B cell (primary cell): ENCODE measurements at regions of chr12 and their contacts with region 1.

Region 1: GRCh38 chr12:95117178-95117599 is 43.8 kb upstream of the NR2C1 start:
- DNase-seq: peak; percentile 79
- ATAC-seq: peak; percentile 76
- H3K4me3 ChIP-seq: no peak overlapping the region
- H3K4me3 Mint-ChIP-seq: no peak overlapping the region
- H3K27ac ChIP-seq: no peak overlapping the region
- H3K27ac Mint-ChIP-seq: no peak overlapping the region
- H3K4me1 ChIP-seq: no peaks in the 10 kb centered on the region
- H3K4me1 Mint-ChIP-seq: no peaks in the 10 kb centered on the region
- H3K27me3 ChIP-seq: no peaks in the 10 kb centered on the region
- H3K27me3 Mint-ChIP-seq: no peaks in the 10 kb centered on the region
- CTCF ChIP-seq: peak; percentile 81

Region 2: DNA sequence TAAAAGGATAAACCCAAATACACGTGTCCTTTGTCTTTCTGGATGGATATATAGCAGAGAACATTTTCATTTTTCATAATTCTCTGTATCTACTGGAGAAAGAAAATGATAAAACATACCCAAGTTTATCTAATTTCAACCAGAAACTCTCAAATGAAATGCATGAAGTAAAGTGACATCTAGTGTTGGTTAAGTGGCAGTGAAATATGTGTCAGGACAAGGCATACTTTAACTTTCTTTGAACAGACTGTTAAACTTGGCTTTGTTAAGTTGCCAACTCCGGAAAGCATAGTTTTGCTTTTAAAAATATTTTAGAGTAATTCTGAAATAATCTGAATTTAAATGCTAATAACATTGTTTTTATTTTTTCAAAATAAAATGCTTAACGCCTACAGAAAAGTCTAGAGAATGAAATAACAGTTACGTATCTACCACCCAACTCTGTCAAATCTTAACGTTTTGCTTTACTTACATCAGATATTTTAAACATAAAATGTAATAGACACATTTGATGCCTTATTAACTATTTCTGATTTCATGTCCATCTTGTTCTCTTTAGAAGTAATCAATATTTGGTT is 698.5 kb after region 1 on chr12:
- CTCF ChIA-PET with region 1: interaction called, 4 read pairs
- POLR2A ChIA-PET with region 1: no interaction called
- intact Hi-C with region 1: loop called (anchors 2 kb)
- DNase-seq: peak; percentile 20
- ATAC-seq: no peak
- H3K4me3 ChIP-seq: no peak overlapping the region
- H3K4me3 Mint-ChIP-seq: no peak overlapping the region
- H3K27ac ChIP-seq: no peak overlapping the region
- H3K27ac Mint-ChIP-seq: no peak overlapping the region
- H3K4me1 ChIP-seq: no peaks in the 10 kb centered on the region
- H3K4me1 Mint-ChIP-seq: no peaks in the 10 kb centered on the region
- H3K27me3 ChIP-seq: peaks cover 0 to 2% (median 0%) of the 10 kb centered on the region in 4 experiments
- H3K27me3 Mint-ChIP-seq: peaks cover 27% of the 10 kb centered on the region
- CTCF ChIP-seq: peak; percentile 55